Endothelial cell of umbilical vein (primary cell): ENCODE measurements at regions of chr1 and their contacts with region 1.

Region 1: DNA sequence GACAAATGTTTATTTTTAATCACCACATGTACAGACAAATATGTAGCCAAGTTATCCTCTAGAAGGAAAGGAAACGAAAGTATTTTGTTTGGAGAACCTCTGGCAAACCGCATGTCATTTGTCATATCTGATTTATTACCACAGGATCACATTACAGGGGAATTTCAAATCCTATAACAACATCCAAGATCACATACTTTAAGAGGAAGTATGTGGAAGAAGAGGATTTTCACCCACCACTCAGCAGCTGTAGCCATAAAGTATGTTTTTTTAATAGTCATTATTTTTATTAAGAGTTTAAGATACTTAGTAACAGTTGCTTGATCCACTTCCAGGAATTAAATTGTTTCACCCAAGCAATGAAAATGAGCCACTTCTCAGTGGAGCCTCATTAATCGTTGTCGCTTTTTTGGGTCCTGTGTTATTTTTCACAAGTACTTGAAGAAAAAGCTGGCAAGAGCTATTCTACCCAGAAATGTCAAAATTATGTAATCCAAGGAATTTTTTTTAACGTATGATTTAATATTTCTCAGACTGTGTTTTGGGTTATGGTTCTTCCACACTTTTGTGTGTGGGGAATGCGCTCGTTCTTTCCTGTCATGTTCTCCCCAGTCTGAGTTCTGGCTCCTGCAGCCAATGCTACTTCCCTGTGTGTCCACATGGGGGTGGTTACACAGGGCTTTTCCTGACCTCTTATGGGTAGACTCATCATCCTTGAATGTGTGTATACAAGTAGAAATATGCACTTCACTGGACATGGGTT is 6.9 kb downstream of the SERTAD4 start:
- DNase-seq: peak; percentile 92
- H3K4me3 ChIP-seq: peak overlapping the region in 1 of 3 experiments; percentile 28
- H3K27ac ChIP-seq: peak overlapping the region; percentile 85
- H3K4me1 ChIP-seq: peaks cover 48% of the 10 kb centered on the region
- H3K27me3 ChIP-seq: no peaks in the 10 kb centered on the region
- CTCF ChIP-seq: peak; percentile 62 to 63
- POLR2A ChIP-seq: peak; percentile 20

Region 2: GRCh38 chr1:209839875-209840491 is 399.5 kb before region 1 on chr1:
- CTCF ChIA-PET with region 1: no interaction called
- POLR2A ChIA-PET with region 1: no interaction called
- dilution Hi-C with region 1: no loop called
- intact Hi-C with region 1: loop called (anchors 1 kb)
- DNase-seq: peak; percentile 99
- H3K4me3 ChIP-seq: peak overlapping the region in 1 of 3 experiments; percentile 2
- H3K27ac ChIP-seq: peak overlapping the region; percentile 80
- H3K4me1 ChIP-seq: peaks cover 61% of the 10 kb centered on the region
- H3K27me3 ChIP-seq: no peaks in the 10 kb centered on the region
- CTCF ChIP-seq: no peak
- POLR2A ChIP-seq: peak; percentile 10

Region 3: DNA sequence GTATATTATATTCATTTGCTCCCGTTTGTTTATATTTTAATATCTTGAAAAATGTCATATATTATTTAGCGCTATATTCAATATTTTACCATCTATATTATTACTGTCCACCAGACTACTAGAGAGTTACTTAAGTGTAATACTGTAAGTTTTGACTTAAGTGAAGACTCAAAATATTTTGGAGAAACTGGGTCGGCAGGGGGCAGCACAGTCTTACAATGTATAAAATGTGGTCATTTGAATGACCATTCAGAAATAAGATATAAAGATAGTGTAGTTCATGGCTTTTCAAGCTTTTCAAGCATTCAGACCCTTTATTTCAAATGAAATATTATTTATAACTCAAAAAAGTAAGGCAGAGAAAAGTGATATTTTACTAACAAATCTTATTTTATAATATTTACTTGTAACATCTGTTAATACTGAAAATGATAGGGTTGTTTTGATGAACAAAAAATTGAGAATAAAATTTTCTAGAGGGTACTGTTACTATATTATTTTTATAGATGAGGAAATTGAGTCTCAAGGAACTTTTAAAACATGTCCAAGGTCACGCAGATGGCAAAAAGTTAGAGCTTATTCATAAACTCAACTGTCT is 96.0 kb before region 1 on chr1:
- CTCF ChIA-PET with region 1: no interaction called
- POLR2A ChIA-PET with region 1: no interaction called
- dilution Hi-C with region 1: no loop called
- intact Hi-C with region 1: loop called (anchors 1 kb)
- DNase-seq: peak; percentile 83
- H3K4me3 ChIP-seq: no peak overlapping the region
- H3K27ac ChIP-seq: no peak overlapping the region
- H3K4me1 ChIP-seq: no peaks in the 10 kb centered on the region
- H3K27me3 ChIP-seq: peaks cover 2 to 8% of the 10 kb centered on the region in 2 experiments
- CTCF ChIP-seq: peak; percentile 37 to 43
- POLR2A ChIP-seq: no peak

Region 4: DNA sequence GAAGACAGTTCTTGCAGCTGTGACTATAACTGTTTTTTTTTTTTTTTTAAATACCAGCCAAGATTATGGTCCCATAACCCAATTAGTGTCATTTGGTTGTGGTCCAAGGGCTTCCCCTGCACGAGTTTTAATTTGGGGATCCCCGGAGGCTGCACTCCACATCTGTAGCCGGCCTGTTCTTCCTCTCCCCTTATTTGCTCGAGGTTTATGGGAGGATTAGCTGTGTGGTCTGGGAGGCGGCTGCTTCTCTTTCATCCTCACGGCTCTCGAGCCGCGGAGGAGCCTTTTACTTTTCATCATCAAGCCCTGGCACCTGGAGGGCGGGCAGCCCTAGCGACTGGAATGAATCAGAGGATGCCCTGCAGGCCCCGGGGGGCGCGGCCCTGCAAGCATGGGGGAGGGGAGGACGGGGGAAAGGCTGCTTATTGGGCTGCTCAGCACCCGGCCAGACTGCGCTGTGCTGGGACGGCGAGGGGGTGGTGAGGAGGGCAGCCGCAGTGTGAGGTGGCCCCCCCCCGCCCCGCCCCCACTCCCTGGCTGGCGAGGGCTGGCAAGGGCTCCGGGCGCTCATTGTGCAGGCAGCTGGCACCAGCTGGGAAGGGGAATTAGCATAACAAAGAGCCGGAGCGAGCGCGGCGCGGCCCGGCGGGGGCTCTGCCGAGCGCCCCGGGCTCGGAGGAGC is 11.6 kb after region 1 on chr1:
- CTCF ChIA-PET with region 1: interaction called, 12 read pairs
- POLR2A ChIA-PET with region 1: no interaction called
- dilution Hi-C with region 1: no loop called
- intact Hi-C with region 1: loop called (anchors 1 kb)
- DNase-seq: peak; percentile 72
- H3K4me3 ChIP-seq: peak overlapping the region; percentile 34 to 57 (median 37)
- H3K27ac ChIP-seq: peak overlapping the region; percentile 39
- H3K4me1 ChIP-seq: peaks cover 20% of the 10 kb centered on the region
- H3K27me3 ChIP-seq: peaks cover 0 to 8% of the 10 kb centered on the region in 2 experiments
- CTCF ChIP-seq: no peak
- POLR2A ChIP-seq: no peak

Region 5: DNA sequence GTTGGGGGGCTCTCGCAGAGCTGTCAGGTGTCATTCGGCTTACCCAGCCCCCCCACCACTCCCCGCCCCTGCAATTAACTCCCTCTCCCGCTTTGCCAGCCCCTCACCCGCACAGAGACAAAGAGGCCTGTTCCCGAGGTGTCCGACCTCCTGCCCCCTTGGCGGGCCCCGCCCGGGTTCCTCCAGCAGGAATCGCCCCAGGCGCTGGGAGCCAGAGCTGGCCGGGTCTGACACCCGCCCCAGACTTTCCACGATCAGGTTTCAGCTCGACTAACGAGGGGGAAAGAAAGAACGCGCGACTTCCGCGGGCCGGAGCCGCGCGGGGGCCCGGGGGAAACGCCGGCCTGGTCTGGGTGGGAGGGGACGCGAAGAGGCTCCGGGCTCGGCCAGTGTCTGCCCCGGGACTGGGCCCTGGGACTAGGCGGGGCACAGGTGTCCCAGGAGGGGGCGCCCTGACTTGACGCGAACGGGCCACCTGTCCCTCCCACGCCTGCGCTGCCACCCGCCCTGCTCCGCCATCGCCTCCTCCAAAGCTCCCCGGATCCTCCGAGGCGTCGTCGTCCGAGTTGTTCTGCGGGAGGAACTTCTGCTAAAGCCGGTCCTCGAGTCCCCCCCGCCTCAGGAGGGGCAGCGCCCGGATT is 52.8 kb after region 1 on chr1:
- CTCF ChIA-PET with region 1: interaction called, 9 read pairs
- POLR2A ChIA-PET with region 1: no interaction called
- dilution Hi-C with region 1: no loop called
- intact Hi-C with region 1: loop called (anchors 2 kb)
- DNase-seq: peak; percentile 16
- H3K4me3 ChIP-seq: peak overlapping the region in 2 of 3 experiments; percentile 5 to 31
- H3K27ac ChIP-seq: no peak overlapping the region
- H3K4me1 ChIP-seq: no peaks in the 10 kb centered on the region
- H3K27me3 ChIP-seq: peaks cover 22 to 25% of the 10 kb centered on the region in 2 experiments
- CTCF ChIP-seq: peak; percentile 16 to 48
- POLR2A ChIP-seq: no peak